ENCODE measurements at regions of chr17 and their contacts with region 1.

Region 1: GRCh38 chr17:27332485-27333409 is 38.8 kb downstream of the WSB1 start:
- DNase-seq: peak; percentile 92
- H3K4me3 Mint-ChIP-seq: peak overlapping the region; percentile 65
- H3K27ac Mint-ChIP-seq: peak overlapping the region; percentile 35
- H3K4me1 Mint-ChIP-seq: peaks cover 23% of the 10 kb centered on the region
- H3K27me3 Mint-ChIP-seq: no peaks in the 10 kb centered on the region

Region 2: GRCh38 chr17:27199948-27200347 is 132.8 kb before region 1 on chr17:
- CTCF ChIA-PET with region 1: interaction called, 12 read pairs
- POLR2A ChIA-PET with region 1: no interaction called
- DNase-seq: peak; percentile 26
- H3K4me3 Mint-ChIP-seq: no peak overlapping the region
- H3K27ac Mint-ChIP-seq: no peak overlapping the region
- H3K4me1 Mint-ChIP-seq: peaks cover 15% of the 10 kb centered on the region
- H3K27me3 Mint-ChIP-seq: no peaks in the 10 kb centered on the region

Region 3: GRCh38 chr17:27245230-27245696 is 87.5 kb before region 1 on chr17:
- CTCF ChIA-PET with region 1: interaction called, 10 read pairs
- POLR2A ChIA-PET with region 1: no interaction called
- DNase-seq: peak; percentile 46
- H3K4me3 Mint-ChIP-seq: no peak overlapping the region
- H3K27ac Mint-ChIP-seq: no peak overlapping the region
- H3K4me1 Mint-ChIP-seq: peaks cover 26% of the 10 kb centered on the region
- H3K27me3 Mint-ChIP-seq: peaks cover 16% of the 10 kb centered on the region

Region 4: GRCh38 chr17:27407916-27408846 is 75.4 kb after region 1 on chr17:
- CTCF ChIA-PET with region 1: no interaction called
- POLR2A ChIA-PET with region 1: no interaction called
- DNase-seq: no peak
- H3K4me3 Mint-ChIP-seq: no peak overlapping the region
- H3K27ac Mint-ChIP-seq: no peak overlapping the region
- H3K4me1 Mint-ChIP-seq: no peaks in the 10 kb centered on the region
- H3K27me3 Mint-ChIP-seq: peaks cover 4% of the 10 kb centered on the region